ENCODE measurements at regions of chr3 and their contacts with region 1.

Region 1: DNA sequence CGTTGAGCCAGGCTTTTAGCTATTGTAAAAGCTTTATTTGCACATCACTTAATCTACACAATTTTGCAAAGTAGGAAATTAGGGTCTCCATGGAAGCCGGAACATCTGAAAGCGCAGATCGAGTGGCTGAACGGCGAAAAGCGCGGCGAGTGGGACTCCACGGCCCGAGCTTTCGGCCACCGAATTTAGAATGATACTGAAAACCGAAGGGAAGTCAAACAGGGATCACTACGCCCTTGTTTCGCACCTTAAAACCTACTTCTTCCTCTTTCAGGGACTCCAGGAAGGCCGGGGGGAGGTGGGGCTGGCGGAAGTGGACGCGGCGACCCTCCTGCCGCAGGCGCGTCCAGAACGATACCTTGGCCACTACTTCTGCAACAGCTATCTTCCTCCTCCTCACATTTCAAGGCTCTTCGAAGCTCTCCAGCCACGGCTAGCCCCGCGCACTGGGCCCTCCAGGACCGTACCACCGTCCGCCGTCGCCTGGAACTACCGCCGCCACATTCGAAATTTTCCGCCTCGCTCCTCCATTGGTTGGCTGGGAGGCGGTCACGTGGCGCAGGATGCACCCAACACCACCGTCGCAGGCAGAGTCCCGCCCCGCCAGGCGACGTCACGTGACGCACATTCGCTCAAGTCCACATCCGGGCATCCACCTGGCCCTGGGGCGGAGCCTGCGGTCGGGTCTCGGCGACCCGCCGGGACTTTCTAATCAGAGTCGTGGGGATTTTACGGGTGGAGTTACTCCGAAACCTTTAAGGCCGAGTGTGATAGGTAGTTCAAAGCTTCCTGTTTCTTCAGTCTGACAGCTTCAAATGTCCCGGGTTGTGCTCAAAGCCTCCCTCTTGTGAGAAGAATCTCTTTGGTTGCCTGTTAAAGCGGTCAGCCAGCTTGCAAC is at the start of gene SGO1:
- DNase-seq: peak; percentile 99
- ATAC-seq: peak; percentile 100
- H3K4me3 ChIP-seq: peak within 1 kb of the TSS; percentile 37 to 83 (median 68)
- H3K27ac ChIP-seq: peak within 1 kb of the TSS; percentile 75 to 97 (median 92)
- H3K4me1 ChIP-seq: peaks cover 0 to 22% (median 16%) of the 10 kb centered on the region in 9 donors
- H3K27me3 ChIP-seq: no peaks in the 10 kb centered on the region
- CTCF ChIP-seq: peak in 2 of 9 donors; percentile 22 to 26
- total RNA-seq, gene SGO1: 0.25 to 2.2 (median 0.50) TPM in 6 of 10 donors, not detected in the others

Region 2: GRCh38 chr3:19946832-19947548 is 239.0 kb before region 1 on chr3 and contains the start of gene RAB5A:
- intact Hi-C with region 1: loop called in 5 of 10 experiments (anchors 2 to 10 kb)
- DNase-seq: peak; percentile 96 to 98
- ATAC-seq: peak; percentile 97 to 99 (median 98)
- H3K4me3 ChIP-seq: peak within 1 kb of the TSS; percentile 79 to 99 (median 98)
- H3K27ac ChIP-seq: peak within 1 kb of the TSS; percentile 89 to 99 (median 98)
- H3K4me1 ChIP-seq: peaks cover 0 to 44% (median 35%) of the 10 kb centered on the region in 9 donors
- H3K27me3 ChIP-seq: no peaks in the 10 kb centered on the region
- CTCF ChIP-seq: peak in 1 of 9 donors; percentile 1
- total RNA-seq, gene RAB5A: 52.2 to 80.9 (median 66.9) TPM

Region 3: GRCh38 chr3:20141851-20142250 is 44.1 kb before region 1 on chr3:
- intact Hi-C with region 1: loop called in 2 of 10 experiments (anchors 5 kb)
- DNase-seq: peak; percentile 37 to 79
- ATAC-seq: peak; percentile 94 to 98 (median 97)
- H3K4me3 ChIP-seq: no peak overlapping the region
- H3K27ac ChIP-seq: peak overlapping the region in 7 of 10 donors; percentile 29 to 77 (median 64)
- H3K4me1 ChIP-seq: peaks cover 0 to 28% (median 4%) of the 10 kb centered on the region in 9 donors
- H3K27me3 ChIP-seq: no peaks in the 10 kb centered on the region
- CTCF ChIP-seq: peak in 1 of 9 donors; percentile 9

Measured in heart right ventricle (tissue), 16 donors.